Psoas muscle (tissue), 8 donors: ENCODE measurements at regions of chr4 and their contacts with region 1.

Region 1: DNA sequence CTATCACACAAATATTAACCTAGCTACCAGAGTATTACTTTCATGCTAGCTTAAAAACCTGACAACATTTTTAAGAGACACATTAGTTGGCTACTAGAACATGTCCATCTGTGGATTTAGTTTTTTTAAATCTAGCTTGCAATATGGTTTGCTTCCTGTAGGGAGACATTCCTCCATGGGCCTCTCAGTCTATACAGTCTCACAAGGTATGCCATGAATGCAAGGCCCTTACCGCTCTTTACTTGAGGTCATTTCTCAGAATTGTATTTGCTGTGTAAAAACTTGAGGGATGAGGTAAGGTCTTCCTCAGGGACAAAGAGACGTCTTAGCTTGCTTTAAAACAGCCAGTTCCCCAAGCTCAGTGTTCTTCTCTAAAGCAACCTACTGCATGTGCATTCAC is 26.9 kb downstream of the UBA6 start:
- DNase-seq: no peak
- ATAC-seq: no peak
- H3K4me3 ChIP-seq: no peak overlapping the region
- H3K27ac ChIP-seq: no peak overlapping the region
- H3K4me1 ChIP-seq: no peaks in the 10 kb centered on the region
- H3K27me3 ChIP-seq: no peaks in the 10 kb centered on the region
- CTCF ChIP-seq: no peak

Region 2: GRCh38 chr4:67080158-67080557 is 593.9 kb before region 1 on chr4:
- intact Hi-C with region 1: no loop called
- DNase-seq: no peak
- ATAC-seq: no peak
- H3K4me3 ChIP-seq: no peak overlapping the region
- H3K27ac ChIP-seq: no peak overlapping the region
- H3K4me1 ChIP-seq: no peaks in the 10 kb centered on the region
- H3K27me3 ChIP-seq: no peaks in the 10 kb centered on the region
- CTCF ChIP-seq: no peak

Region 3: GRCh38 chr4:67632492-67632891 is 41.6 kb before region 1 on chr4:
- intact Hi-C with region 1: loop called (anchors 5 to 10 kb)
- DNase-seq: no peak
- ATAC-seq: no peak
- H3K4me3 ChIP-seq: no peak overlapping the region
- H3K27ac ChIP-seq: no peak overlapping the region
- H3K4me1 ChIP-seq: no peaks in the 10 kb centered on the region
- H3K27me3 ChIP-seq: no peaks in the 10 kb centered on the region
- CTCF ChIP-seq: no peak